GM12878 (cell line): ENCODE measurements at regions of chr4 and their contacts with region 1.

Region 1: DNA sequence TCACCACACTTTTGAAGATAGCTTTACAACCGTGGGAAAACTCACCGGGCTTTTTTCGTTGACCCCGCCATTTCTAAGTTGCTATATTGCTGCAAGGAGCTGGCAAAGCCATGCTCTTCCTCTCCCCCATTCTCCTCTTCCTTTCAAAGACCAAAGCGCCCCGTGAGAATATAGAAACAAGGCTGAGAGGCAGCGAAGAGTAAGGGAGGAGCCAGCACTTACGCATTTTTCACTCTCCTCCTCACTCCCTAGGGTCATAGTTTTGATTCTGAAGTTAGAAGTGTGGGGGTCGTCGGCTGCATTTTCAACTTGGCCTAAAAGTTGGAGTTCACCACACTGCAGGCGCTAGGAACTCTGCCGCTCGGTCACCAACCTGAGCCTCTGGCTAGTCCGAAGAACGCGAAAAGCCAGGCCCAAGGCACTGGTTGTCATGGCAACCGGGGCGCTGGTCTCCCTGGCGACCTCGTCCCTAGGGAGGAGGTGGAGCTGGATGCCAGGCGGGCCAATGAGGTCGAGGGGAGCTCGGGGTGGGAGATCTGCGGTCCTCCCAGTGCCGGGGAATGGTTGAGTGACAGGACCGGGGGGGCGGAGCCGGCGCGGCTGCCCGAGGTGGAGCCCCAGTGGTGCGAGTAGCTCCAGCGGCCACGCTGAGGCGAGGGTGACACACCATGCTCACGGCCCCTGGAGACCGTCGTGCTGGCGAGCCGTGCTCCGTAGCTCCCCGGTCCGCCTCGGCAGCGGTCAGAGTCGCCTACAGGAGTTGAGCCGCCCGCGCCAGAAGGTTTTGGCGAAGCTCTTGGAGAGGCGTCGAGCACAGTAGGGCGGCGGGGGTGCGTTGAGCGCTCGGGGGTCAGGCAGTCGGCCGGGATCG is at the start of gene PTPN13:
- DNase-seq: peak; percentile 84
- ATAC-seq: peak; percentile 87
- H3K4me3 ChIP-seq: peak within 1 kb of the TSS; percentile 48
- H3K27ac ChIP-seq: no peak within 1 kb of the TSS
- H3K4me1 ChIP-seq: no peaks in the 10 kb centered on the region
- H3K27me3 ChIP-seq: peaks cover 0 to 5% of the 10 kb centered on the region in 2 experiments; a peak in 1 of 4 replicates
- CTCF ChIP-seq: peak in 2 of 3 experiments; percentile 7 to 39; a peak in 1 of 6 replicates
- EP300 ChIP-seq: no peak
- POLR2A ChIP-seq: peak; percentile 79
- RAD21 ChIP-seq: peak; percentile 21; the same call in 1 of the 2 replicates
- polyA plus RNA-seq, gene PTPN13: 8.5 to 9.3 TPM

Region 2: GRCh38 chr4:86544310-86544966 is 49.5 kb before region 1 on chr4:
- CTCF ChIA-PET with region 1: interaction called, 5 read pairs
- POLR2A ChIA-PET with region 1: interaction called, 5 read pairs
- RAD21 ChIA-PET with region 1: interaction called, 29 read pairs
- SMC1A ChIA-PET with region 1: interaction called, 8 read pairs
- in situ Hi-C with region 1: no loop called
- intact Hi-C with region 1: no loop called
- DNase-seq: no peak
- ATAC-seq: peak; percentile 89
- H3K4me3 ChIP-seq: no peak overlapping the region
- H3K27ac ChIP-seq: peak overlapping the region; percentile 35; the same call in 1 of the 2 replicates
- H3K4me1 ChIP-seq: peaks cover 12% of the 10 kb centered on the region
- H3K27me3 ChIP-seq: no peaks in the 10 kb centered on the region; a peak in 1 of 4 replicates
- CTCF ChIP-seq: no peak
- EP300 ChIP-seq: peak in 1 of 2 experiments; percentile 68; a peak in 1 of 4 replicates
- POLR2A ChIP-seq: no peak
- RAD21 ChIP-seq: no peak

Region 3: DNA sequence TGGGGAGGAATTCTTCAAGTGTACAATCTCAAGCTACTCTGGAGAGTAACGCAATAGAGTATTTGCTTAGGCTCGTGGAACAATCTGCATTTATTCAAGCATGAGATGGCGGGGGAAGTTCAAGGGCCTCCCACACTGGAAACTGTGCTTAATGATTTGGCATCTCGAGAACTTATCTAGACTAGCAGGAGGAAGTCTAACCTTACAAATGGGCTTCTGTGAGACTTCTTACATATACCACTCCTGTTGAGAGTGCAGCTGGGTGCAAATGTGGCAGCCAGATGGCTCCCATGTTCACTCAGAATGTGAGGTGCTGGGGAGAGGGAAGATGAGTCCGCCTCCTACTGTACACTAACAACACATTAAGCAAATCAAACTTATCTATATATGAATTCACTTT is 29.1 kb before region 1 on chr4:
- CTCF ChIA-PET with region 1: interaction called, 26 read pairs
- POLR2A ChIA-PET with region 1: interaction called, 7 read pairs
- RAD21 ChIA-PET with region 1: interaction called, 45 read pairs
- SMC1A ChIA-PET with region 1: interaction called, 77 read pairs
- in situ Hi-C with region 1: no loop called
- intact Hi-C with region 1: no loop called
- DNase-seq: no peak
- ATAC-seq: peak; percentile 52
- H3K4me3 ChIP-seq: no peak overlapping the region
- H3K27ac ChIP-seq: no peak overlapping the region
- H3K4me1 ChIP-seq: no peaks in the 10 kb centered on the region; the same call in 1 of the 2 replicates
- H3K27me3 ChIP-seq: no peaks in the 10 kb centered on the region
- CTCF ChIP-seq: peak in 1 of 3 experiments; percentile 50; a peak in 2 of 6 replicates
- EP300 ChIP-seq: no peak
- POLR2A ChIP-seq: no peak
- RAD21 ChIP-seq: peak; percentile 56; the same call in 1 of the 2 replicates

Region 4: GRCh38 chr4:86615501-86615900 is 21.6 kb after region 1 on chr4:
- CTCF ChIA-PET with region 1: interaction called, 13 read pairs
- POLR2A ChIA-PET with region 1: interaction called, 6 read pairs
- RAD21 ChIA-PET with region 1: interaction called, 7 read pairs
- SMC1A ChIA-PET with region 1: interaction called, 71 read pairs
- in situ Hi-C with region 1: no loop called
- intact Hi-C with region 1: no loop called
- DNase-seq: no peak
- ATAC-seq: peak; percentile 71
- H3K4me3 ChIP-seq: no peak overlapping the region
- H3K27ac ChIP-seq: no peak overlapping the region
- H3K4me1 ChIP-seq: no peaks in the 10 kb centered on the region
- H3K27me3 ChIP-seq: 0 out of 4 replicates have a peak, but pooled peaks cover 0 to 1% of the 10 kb centered on the region in 2 experiments
- CTCF ChIP-seq: no peak
- EP300 ChIP-seq: peak in 1 of 2 experiments; percentile 58; a peak in 1 of 4 replicates
- POLR2A ChIP-seq: no peak
- RAD21 ChIP-seq: no peak

Region 5: GRCh38 chr4:86633854-86634253 is 39.9 kb after region 1 on chr4:
- CTCF ChIA-PET with region 1: interaction called, 7 read pairs
- POLR2A ChIA-PET with region 1: interaction called, 10 read pairs
- RAD21 ChIA-PET with region 1: interaction called, 47 read pairs
- SMC1A ChIA-PET with region 1: interaction called, 23 read pairs
- in situ Hi-C with region 1: no loop called
- intact Hi-C with region 1: no loop called
- DNase-seq: no peak
- ATAC-seq: 0 out of 3 replicates have a peak, but pooled peaks have one; percentile 16
- H3K4me3 ChIP-seq: no peak overlapping the region
- H3K27ac ChIP-seq: no peak overlapping the region
- H3K4me1 ChIP-seq: no peaks in the 10 kb centered on the region
- H3K27me3 ChIP-seq: no peaks in the 10 kb centered on the region
- CTCF ChIP-seq: no peak
- EP300 ChIP-seq: no peak
- POLR2A ChIP-seq: no peak
- RAD21 ChIP-seq: no peak

Region 6: GRCh38 chr4:86657910-86658309 is 64.0 kb after region 1 on chr4:
- CTCF ChIA-PET with region 1: interaction called, 5 read pairs
- POLR2A ChIA-PET with region 1: interaction called, 3 read pairs
- RAD21 ChIA-PET with region 1: interaction called, 12 read pairs
- SMC1A ChIA-PET with region 1: interaction called, 8 read pairs
- in situ Hi-C with region 1: no loop called
- intact Hi-C with region 1: no loop called
- DNase-seq: peak; percentile 11
- ATAC-seq: peak; percentile 92
- H3K4me3 ChIP-seq: no peak overlapping the region
- H3K27ac ChIP-seq: no peak overlapping the region
- H3K4me1 ChIP-seq: peaks cover 3% of the 10 kb centered on the region; the same call in 1 of the 2 replicates
- H3K27me3 ChIP-seq: no peaks in the 10 kb centered on the region
- CTCF ChIP-seq: peak in 1 of 3 experiments; percentile 24; a peak in 1 of 6 replicates
- EP300 ChIP-seq: no peak
- POLR2A ChIP-seq: no peak
- RAD21 ChIP-seq: no peak

Region 7: GRCh38 chr4:87304671-87305432 is 710.9 kb after region 1 on chr4:
- CTCF ChIA-PET with region 1: no interaction called
- POLR2A ChIA-PET with region 1: no interaction called
- RAD21 ChIA-PET with region 1: no interaction called
- SMC1A ChIA-PET with region 1: no interaction called
- in situ Hi-C with region 1: no loop called
- intact Hi-C with region 1: no loop called
- DNase-seq: no peak
- ATAC-seq: no peak
- H3K4me3 ChIP-seq: no peak overlapping the region
- H3K27ac ChIP-seq: no peak overlapping the region
- H3K4me1 ChIP-seq: no peaks in the 10 kb centered on the region
- H3K27me3 ChIP-seq: no peaks in the 10 kb centered on the region
- CTCF ChIP-seq: no peak
- EP300 ChIP-seq: no peak
- POLR2A ChIP-seq: no peak
- RAD21 ChIP-seq: no peak